ENCODE measurements at regions of chr17 and their contacts with region 1.

Region 1: GRCh38 chr17:1673041-1673785 is 11.5 kb downstream of the PRPF8 start:
- DNase-seq: no peak
- H3K4me3 ChIP-seq: no peak overlapping the region
- H3K27ac ChIP-seq: no peak overlapping the region
- H3K4me1 ChIP-seq: no peaks in the 10 kb centered on the region
- H3K27me3 ChIP-seq: no peaks in the 10 kb centered on the region
- CTCF ChIP-seq: no peak
- POLR2A ChIP-seq: no peak

Region 2: GRCh38 chr17:1658100-1658499 is 15.1 kb before region 1 on chr17:
- CTCF ChIA-PET with region 1: interaction called, 23 read pairs
- POLR2A ChIA-PET with region 1: no interaction called
- dilution Hi-C with region 1: no loop called
- intact Hi-C with region 1: no loop called
- DNase-seq: no peak
- H3K4me3 ChIP-seq: no peak overlapping the region
- H3K27ac ChIP-seq: no peak overlapping the region
- H3K4me1 ChIP-seq: no peaks in the 10 kb centered on the region
- H3K27me3 ChIP-seq: no peaks in the 10 kb centered on the region
- CTCF ChIP-seq: no peak
- POLR2A ChIP-seq: no peak

Region 3: GRCh38 chr17:1865252-1866037 is 192.2 kb after region 1 on chr17:
- CTCF ChIA-PET with region 1: interaction called, 12 read pairs
- POLR2A ChIA-PET with region 1: no interaction called
- dilution Hi-C with region 1: no loop called
- intact Hi-C with region 1: loop called (anchors 1 kb)
- DNase-seq: peak; percentile 37
- H3K4me3 ChIP-seq: no peak overlapping the region
- H3K27ac ChIP-seq: no peak overlapping the region
- H3K4me1 ChIP-seq: peaks cover 5% of the 10 kb centered on the region
- H3K27me3 ChIP-seq: no peaks in the 10 kb centered on the region
- CTCF ChIP-seq: peak; percentile 33 to 46
- POLR2A ChIP-seq: no peak

Region 4: GRCh38 chr17:2179615-2180295 is 506.5 kb after region 1 on chr17:
- CTCF ChIA-PET with region 1: no interaction called
- POLR2A ChIA-PET with region 1: no interaction called
- dilution Hi-C with region 1: no loop called
- intact Hi-C with region 1: no loop called
- DNase-seq: peak; percentile 98
- H3K4me3 ChIP-seq: no peak overlapping the region
- H3K27ac ChIP-seq: peak overlapping the region; percentile 94
- H3K4me1 ChIP-seq: peaks cover 75% of the 10 kb centered on the region
- H3K27me3 ChIP-seq: no peaks in the 10 kb centered on the region
- CTCF ChIP-seq: no peak
- POLR2A ChIP-seq: peak; percentile 29

Measured in endothelial cell of umbilical vein (primary cell).